ENCODE measurements at regions of chr1 and their contacts with region 1.

Region 1: DNA sequence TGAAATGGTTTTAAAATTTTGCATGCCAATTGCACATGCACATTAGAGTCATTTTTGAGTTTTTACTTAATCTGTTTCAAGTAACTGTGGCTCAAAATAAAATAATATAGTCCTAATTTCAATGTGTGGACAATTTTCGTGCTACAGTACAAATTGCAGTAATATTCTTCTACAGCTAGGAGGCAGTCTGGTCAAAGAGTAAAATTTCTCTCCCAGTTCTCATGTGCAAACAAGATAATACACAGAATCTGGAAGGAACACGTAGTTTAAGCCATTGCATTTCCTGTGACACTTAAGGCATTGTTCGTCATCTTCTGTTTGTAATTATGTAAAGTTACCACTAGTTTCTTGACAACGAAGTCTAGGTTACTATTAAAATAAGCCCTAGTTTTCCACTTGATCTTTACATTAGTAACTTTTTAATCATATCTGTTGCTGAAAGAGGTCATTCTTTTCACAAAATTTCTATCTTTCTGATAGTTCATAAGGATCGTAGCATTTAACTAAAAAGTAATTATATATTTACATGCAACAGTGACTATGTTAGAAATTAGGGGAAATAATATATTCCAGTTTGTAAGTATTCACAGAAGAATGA is 28.9 kb downstream of the ODR4 start:
- DNase-seq: peak; percentile 89
- H3K4me3 ChIP-seq: no peak overlapping the region
- H3K27ac ChIP-seq: peak overlapping the region; percentile 89
- H3K4me1 ChIP-seq: peaks cover 6% of the 10 kb centered on the region
- H3K27me3 ChIP-seq: no peaks in the 10 kb centered on the region
- CTCF ChIP-seq: peak; percentile 47 to 66
- POLR2A ChIP-seq: no peak

Region 2: DNA sequence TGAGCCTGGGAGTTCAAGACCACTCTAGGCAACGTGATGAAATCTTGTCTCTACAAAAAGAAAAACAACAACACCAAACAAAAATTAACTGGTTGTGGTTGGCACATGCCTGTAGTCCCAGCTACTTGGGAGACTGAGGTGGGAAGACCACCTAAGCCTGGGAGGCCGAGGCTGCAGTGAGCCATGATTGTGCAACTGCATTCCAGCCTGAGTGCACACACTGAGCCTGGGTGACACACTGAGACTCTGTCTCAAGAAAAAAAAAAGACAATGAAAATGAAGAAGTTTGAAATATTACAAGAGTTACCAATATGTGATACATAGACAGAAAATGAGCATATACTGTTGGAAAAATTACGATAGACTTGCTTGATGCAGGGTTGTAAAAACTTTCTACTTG is 24.5 kb after region 1 on chr1:
- CTCF ChIA-PET with region 1: no interaction called
- POLR2A ChIA-PET with region 1: no interaction called
- dilution Hi-C with region 1: no loop called
- intact Hi-C with region 1: no loop called
- DNase-seq: no peak
- H3K4me3 ChIP-seq: no peak overlapping the region
- H3K27ac ChIP-seq: no peak overlapping the region
- H3K4me1 ChIP-seq: no peaks in the 10 kb centered on the region
- H3K27me3 ChIP-seq: no peaks in the 10 kb centered on the region
- CTCF ChIP-seq: no peak
- POLR2A ChIP-seq: no peak

Region 3: DNA sequence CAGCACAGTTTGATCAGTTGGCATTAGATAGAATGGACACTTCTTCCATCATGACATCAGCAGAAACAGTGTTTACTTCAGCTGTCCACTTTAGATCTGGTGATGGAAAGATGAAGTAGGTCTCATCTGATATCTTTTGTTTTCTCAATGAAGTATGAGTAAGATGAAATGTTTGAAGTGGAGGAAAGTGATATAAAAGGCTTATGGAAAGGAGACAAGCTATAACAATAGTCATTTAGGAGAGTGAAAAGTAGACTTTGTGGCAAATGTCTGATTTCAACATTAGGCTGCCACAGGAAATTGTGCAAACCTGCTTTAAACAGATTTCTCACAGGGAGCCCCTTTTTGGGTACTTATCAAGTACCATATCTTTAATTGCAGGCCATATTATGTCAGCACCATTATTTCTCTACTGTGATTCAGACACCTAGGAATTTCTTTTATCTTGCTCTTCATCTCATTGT is 38.1 kb after region 1 on chr1:
- CTCF ChIA-PET with region 1: interaction called, 4 read pairs
- POLR2A ChIA-PET with region 1: no interaction called
- dilution Hi-C with region 1: no loop called
- intact Hi-C with region 1: loop called (anchors 1 kb)
- DNase-seq: peak; percentile 94
- H3K4me3 ChIP-seq: no peak overlapping the region
- H3K27ac ChIP-seq: peak overlapping the region; percentile 71
- H3K4me1 ChIP-seq: peaks cover 33% of the 10 kb centered on the region
- H3K27me3 ChIP-seq: no peaks in the 10 kb centered on the region
- CTCF ChIP-seq: no peak
- POLR2A ChIP-seq: peak; percentile 76

Region 4: DNA sequence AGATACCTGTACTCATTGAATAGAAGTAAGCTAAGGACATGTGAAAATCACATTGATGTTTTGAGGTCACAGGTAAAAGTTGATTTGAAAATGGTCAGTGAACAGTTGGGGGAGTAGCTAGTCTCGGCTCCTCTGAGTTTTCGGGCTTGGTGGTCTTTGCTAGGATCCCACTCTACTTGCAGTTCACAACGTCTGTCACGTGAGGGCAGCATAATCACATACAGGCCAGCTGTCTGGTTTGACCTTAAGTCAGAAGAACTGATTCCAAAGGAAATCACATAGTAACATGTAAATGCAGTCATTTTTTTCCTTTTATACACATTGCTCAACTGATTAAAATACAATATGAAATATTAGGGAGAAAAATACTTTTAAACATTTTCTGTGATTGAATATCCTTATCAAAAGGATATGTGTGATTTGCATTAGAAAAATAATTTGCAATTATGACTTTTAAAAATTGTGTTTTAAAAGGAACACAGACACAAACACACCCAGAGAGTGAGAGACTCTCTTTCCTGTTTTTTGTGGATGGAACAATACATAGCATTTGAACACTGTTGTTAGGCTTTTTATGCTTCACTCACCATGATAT is 78.2 kb after region 1 on chr1:
- CTCF ChIA-PET with region 1: interaction called, 10 read pairs
- POLR2A ChIA-PET with region 1: no interaction called
- dilution Hi-C with region 1: no loop called
- intact Hi-C with region 1: loop called (anchors 1 kb)
- DNase-seq: peak; percentile 90
- H3K4me3 ChIP-seq: no peak overlapping the region
- H3K27ac ChIP-seq: peak overlapping the region; percentile 19
- H3K4me1 ChIP-seq: peaks cover 16% of the 10 kb centered on the region
- H3K27me3 ChIP-seq: no peaks in the 10 kb centered on the region
- CTCF ChIP-seq: peak; percentile 81 to 87
- POLR2A ChIP-seq: no peak

Region 5: GRCh38 chr1:186828611-186829454 is 424.3 kb after region 1 on chr1 and contains the start of gene PLA2G4A:
- CTCF ChIA-PET with region 1: no interaction called
- POLR2A ChIA-PET with region 1: no interaction called
- dilution Hi-C with region 1: no loop called
- intact Hi-C with region 1: loop called (anchors 10 kb)
- DNase-seq: peak; percentile 87
- H3K4me3 ChIP-seq: peak within 1 kb of the TSS; percentile 67 to 100 (median 98)
- H3K27ac ChIP-seq: peak within 1 kb of the TSS; percentile 75
- H3K4me1 ChIP-seq: peaks cover 7% of the 10 kb centered on the region
- H3K27me3 ChIP-seq: no peaks in the 10 kb centered on the region
- CTCF ChIP-seq: no peak
- POLR2A ChIP-seq: no peak
- total RNA-seq, gene PLA2G4A: 10.6 and 13.3 TPM in 2 replicates

Region 6: GRCh38 chr1:186915555-186915954 is 511.0 kb after region 1 on chr1:
- CTCF ChIA-PET with region 1: interaction called, 7 read pairs
- POLR2A ChIA-PET with region 1: no interaction called
- dilution Hi-C with region 1: no loop called
- intact Hi-C with region 1: loop called (anchors 1 kb)
- DNase-seq: peak; percentile 20
- H3K4me3 ChIP-seq: no peak overlapping the region
- H3K27ac ChIP-seq: no peak overlapping the region
- H3K4me1 ChIP-seq: peaks cover 20% of the 10 kb centered on the region
- H3K27me3 ChIP-seq: no peaks in the 10 kb centered on the region
- CTCF ChIP-seq: no peak
- POLR2A ChIP-seq: no peak

Region 7: DNA sequence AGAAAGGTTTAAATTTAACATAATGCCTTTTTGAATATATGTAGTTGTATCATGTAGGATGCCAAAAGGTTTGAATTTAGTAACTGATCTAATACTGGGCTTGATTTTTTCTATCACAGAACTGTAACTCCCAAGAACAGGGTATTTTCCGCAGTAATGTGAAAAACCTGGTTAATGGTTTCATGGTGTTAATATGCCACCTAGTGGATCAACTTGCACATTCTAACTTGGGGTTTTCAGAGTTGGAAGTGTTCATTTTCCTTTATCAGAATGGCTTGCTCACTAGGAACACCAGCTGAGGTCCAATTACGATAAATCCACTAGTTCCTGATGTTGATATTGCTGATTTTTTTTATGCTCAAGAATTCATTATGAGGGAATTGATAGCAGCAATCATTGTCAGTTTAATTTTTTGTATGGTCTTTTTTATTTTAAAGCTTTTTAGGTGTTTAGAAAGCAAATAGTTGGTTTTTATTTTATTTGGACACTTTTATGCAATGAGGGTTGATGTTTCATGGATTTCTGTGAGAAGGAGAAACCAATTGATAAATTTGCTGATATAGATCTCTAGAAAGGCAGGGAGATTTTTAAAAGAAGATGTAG is 581.4 kb after region 1 on chr1:
- CTCF ChIA-PET with region 1: interaction called, 25 read pairs
- POLR2A ChIA-PET with region 1: no interaction called
- dilution Hi-C with region 1: no loop called
- intact Hi-C with region 1: loop called (anchors 1 kb)
- DNase-seq: peak; percentile 90
- H3K4me3 ChIP-seq: no peak overlapping the region
- H3K27ac ChIP-seq: peak overlapping the region; percentile 76
- H3K4me1 ChIP-seq: peaks cover 16% of the 10 kb centered on the region
- H3K27me3 ChIP-seq: no peaks in the 10 kb centered on the region
- CTCF ChIP-seq: peak; percentile 45 to 48
- POLR2A ChIP-seq: no peak

Measured in endothelial cell of umbilical vein (primary cell).